Activated naive CD4-positive, alpha-beta T cell treated with anti-CD3 and anti-CD28 coated beads for 36 hours (primary cell): ENCODE measurements at regions of chr12 and their contacts with region 1.

Region 1: GRCh38 chr12:98572010-98572409 is 21.5 kb upstream of the SLC25A3 start:
- DNase-seq: no peak
- H3K4me3 Mint-ChIP-seq: no peak overlapping the region
- H3K27ac Mint-ChIP-seq: no peak overlapping the region
- H3K4me1 Mint-ChIP-seq: no peaks in the 10 kb centered on the region
- H3K27me3 Mint-ChIP-seq: peaks cover 2% of the 10 kb centered on the region

Region 2: GRCh38 chr12:98612696-98613334 is 40.8 kb after region 1 on chr12:
- CTCF ChIA-PET with region 1: no interaction called
- intact Hi-C with region 1: no loop called
- DNase-seq: no peak
- H3K4me3 Mint-ChIP-seq: no peak overlapping the region
- H3K27ac Mint-ChIP-seq: no peak overlapping the region
- H3K4me1 Mint-ChIP-seq: peaks cover 2% of the 10 kb centered on the region
- H3K27me3 Mint-ChIP-seq: no peaks in the 10 kb centered on the region

Region 3: DNA sequence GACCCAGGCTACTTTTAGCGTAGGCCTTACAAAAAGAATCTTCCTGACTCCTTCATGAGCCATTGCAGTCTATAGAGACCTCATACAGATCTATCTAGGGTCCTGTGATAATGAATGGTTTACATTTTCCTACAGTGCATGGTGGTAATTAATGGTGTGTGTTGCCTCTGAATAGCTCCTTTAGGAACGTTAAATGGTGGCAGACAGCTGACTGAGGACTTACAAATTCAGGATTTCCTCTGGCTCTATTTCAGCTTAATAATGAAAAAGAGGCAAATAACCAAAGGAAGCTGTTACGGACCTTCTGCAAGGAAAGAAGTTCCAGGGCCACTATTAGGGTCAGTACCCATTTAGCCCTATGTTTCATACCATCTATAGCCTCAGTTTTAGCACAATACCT is 67.5 kb after region 1 on chr12:
- CTCF ChIA-PET with region 1: interaction called, 11 read pairs
- intact Hi-C with region 1: loop called (anchors 2 kb)
- DNase-seq: no peak
- H3K4me3 Mint-ChIP-seq: no peak overlapping the region
- H3K27ac Mint-ChIP-seq: no peak overlapping the region
- H3K4me1 Mint-ChIP-seq: peaks cover 12% of the 10 kb centered on the region
- H3K27me3 Mint-ChIP-seq: no peaks in the 10 kb centered on the region